ENCODE measurements at regions of chr1 and their contacts with region 1.

Region 1: GRCh38 chr1:2091611-2092604 is 41.7 kb downstream of the PRKCZ start:
- ATAC-seq: peak in 7 of 8 experiments; percentile 15 to 85 (median 33)
- H3K4me3 ChIP-seq: no peak overlapping the region
- H3K27ac ChIP-seq: no peak overlapping the region
- H3K4me1 ChIP-seq: peaks cover 0 to 23% of the 10 kb centered on the region in 2 donors

Region 2: DNA sequence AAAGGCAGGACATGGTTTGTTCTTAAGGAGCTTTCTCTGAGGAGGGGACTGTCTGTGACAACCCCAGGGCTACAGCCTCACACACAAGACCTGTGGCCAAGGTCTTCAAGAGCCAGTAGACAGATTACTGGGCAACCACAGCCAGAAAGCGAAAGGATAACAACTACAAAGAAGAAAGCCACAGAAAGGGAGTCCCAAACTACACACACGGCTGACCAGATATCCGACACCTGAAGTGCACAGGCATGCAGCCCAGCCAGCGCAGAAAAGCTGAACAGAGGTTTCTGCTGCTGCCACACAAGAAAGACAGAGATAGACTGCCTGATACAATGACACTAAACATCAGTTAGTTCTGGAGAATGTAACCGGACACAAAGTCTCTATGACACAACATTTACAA is 292.2 kb before region 1 on chr1:
- in situ Hi-C with region 1: no loop called
- ATAC-seq: no peak
- H3K4me3 ChIP-seq: no peak overlapping the region
- H3K27ac ChIP-seq: no peak overlapping the region
- H3K4me1 ChIP-seq: no peaks in the 10 kb centered on the region

Region 3: DNA sequence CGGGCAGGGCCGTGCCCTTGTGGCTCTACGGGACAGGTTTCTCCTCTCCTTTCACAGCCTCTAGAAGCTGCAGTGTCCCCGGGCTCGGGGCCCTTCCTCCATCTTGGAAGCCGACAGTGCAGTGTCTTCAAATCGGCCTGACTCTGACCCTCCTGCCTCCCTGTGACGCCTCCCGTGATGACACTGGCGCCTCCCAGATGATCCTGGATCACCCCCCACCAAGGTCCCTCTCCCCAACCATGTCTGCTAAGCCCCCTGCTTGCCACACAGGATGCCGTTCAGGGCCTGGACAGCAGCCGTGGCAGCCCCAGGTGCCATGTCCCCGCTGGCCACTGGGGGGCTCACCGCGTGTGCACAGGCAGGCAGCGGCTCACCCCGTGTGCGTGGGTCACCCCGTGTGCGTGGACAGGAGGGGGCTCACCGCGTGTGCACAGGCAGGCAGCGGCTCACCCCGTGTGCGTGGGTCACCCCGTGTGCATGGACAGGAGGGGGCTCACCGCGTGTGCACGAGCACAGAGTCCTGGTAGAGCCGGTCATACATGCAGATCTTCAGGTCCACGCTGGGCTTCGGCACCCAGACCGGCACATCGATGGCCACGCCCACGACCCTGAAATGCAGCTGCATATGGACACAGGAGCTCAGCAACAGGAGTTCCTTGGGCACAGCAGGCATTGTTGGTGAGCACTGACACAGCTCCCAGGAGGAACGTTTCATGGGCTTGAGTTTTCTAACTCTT is 147.9 kb before region 1 on chr1:
- in situ Hi-C with region 1: loop called in 1 of 9 experiments (anchors 25 kb)
- ATAC-seq: peak; percentile 84 to 97 (median 91)
- H3K4me3 ChIP-seq: peak overlapping the region in 3 of 5 donors; percentile 15 to 21 (median 19)
- H3K27ac ChIP-seq: no peak overlapping the region
- H3K4me1 ChIP-seq: peaks cover 8 to 22% of the 10 kb centered on the region in 2 donors